Esophagus muscularis mucosa (tissue), 4 donors: ENCODE measurements at regions of chr2 and their contacts with region 1.

Region 1: GRCh38 chr2:227406177-227407031 is 18.7 kb upstream of the SCYGR1 start:
- DNase-seq: no peak
- H3K4me3 ChIP-seq: peak overlapping the region in 1 of 4 donors; percentile 6
- H3K27ac ChIP-seq: peak overlapping the region; percentile 58 to 72 (median 70)
- H3K4me1 ChIP-seq: peaks cover 15 to 17% (median 16%) of the 10 kb centered on the region in 4 donors
- H3K27me3 ChIP-seq: peaks cover 0 to 4% (median 0%) of the 10 kb centered on the region in 4 donors
- CTCF ChIP-seq: peak; percentile 62 to 65 (median 62)
- EP300 ChIP-seq: no peak
- POLR2A ChIP-seq: no peak

Region 2: DNA sequence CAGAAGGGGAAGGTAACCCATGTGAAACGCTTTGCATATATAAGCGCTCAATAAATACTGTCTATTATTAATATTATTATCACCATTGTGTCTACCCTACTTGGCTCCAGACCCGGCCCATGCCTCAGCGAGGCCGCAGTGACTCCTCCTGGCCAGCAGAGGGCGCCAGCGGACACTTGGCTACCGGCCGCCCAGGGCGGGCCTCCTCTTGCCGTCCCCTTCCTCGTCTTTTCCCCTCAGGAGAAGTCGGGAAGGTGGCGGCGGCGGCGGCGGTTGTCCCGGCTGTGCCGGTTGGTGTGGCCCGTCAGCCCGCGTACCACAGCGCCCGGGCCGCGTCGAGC is 65.5 kb after region 1 on chr2 and contains the start of gene AGFG1:
- intact Hi-C with region 1: loop called (anchors 5 kb)
- DNase-seq: peak; percentile 93
- H3K4me3 ChIP-seq: peak within 1 kb of the TSS; percentile 97 to 99 (median 98)
- H3K27ac ChIP-seq: peak within 1 kb of the TSS; percentile 92 to 94 (median 94)
- H3K4me1 ChIP-seq: peaks cover 11 to 40% (median 37%) of the 10 kb centered on the region in 4 donors
- H3K27me3 ChIP-seq: no peaks in the 10 kb centered on the region
- CTCF ChIP-seq: peak; percentile 97 to 100 (median 98)
- EP300 ChIP-seq: no peak
- POLR2A ChIP-seq: peak; percentile 22
- total RNA-seq, gene AGFG1: 27.4 to 73.4 (median 52.7) TPM

Region 3: GRCh38 chr2:227766373-227766883 is 360.0 kb after region 1 on chr2:
- intact Hi-C with region 1: loop called (anchors 5 kb)
- DNase-seq: no peak
- H3K4me3 ChIP-seq: no peak overlapping the region
- H3K27ac ChIP-seq: peak overlapping the region in 1 of 4 donors; percentile 32
- H3K4me1 ChIP-seq: peaks cover 0 to 9% (median 8%) of the 10 kb centered on the region in 4 donors
- H3K27me3 ChIP-seq: no peaks in the 10 kb centered on the region
- CTCF ChIP-seq: peak; percentile 83 to 94 (median 88)
- EP300 ChIP-seq: no peak
- POLR2A ChIP-seq: no peak